ENCODE measurements at regions of chr1 and their contacts with region 1.

Region 1: GRCh38 chr1:203625628-203626019 is 1.0 kb upstream of the ATP2B4 start:
- DNase-seq: peak in 8 of 9 donors; percentile 54 to 88 (median 84)
- ATAC-seq: peak; percentile 82
- H3K4me3 ChIP-seq: peak overlapping the region; percentile 71
- H3K4me3 Mint-ChIP-seq: peak overlapping the region; percentile 89 to 100 (median 98)
- H3K27ac ChIP-seq: peak overlapping the region; percentile 82
- H3K27ac Mint-ChIP-seq: peak overlapping the region; percentile 73 to 98 (median 96)
- H3K4me1 ChIP-seq: peaks cover 17% of the 10 kb centered on the region in 2 donors
- H3K4me1 Mint-ChIP-seq: peaks cover 28 to 66% (median 37%) of the 10 kb centered on the region in 7 donors
- H3K27me3 ChIP-seq: no peaks in the 10 kb centered on the region
- H3K27me3 Mint-ChIP-seq: no peaks in the 10 kb centered on the region

Region 2: GRCh38 chr1:203320591-203321272 is 304.9 kb before region 1 on chr1:
- CTCF ChIA-PET with region 1: no interaction called
- POLR2A ChIA-PET with region 1: interaction called, 7 read pairs
- intact Hi-C with region 1: loop called (anchors 5 kb)
- DNase-seq: peak in 8 of 9 donors; percentile 50 to 93 (median 88)
- ATAC-seq: peak; percentile 76
- H3K4me3 ChIP-seq: peak overlapping the region; percentile 41
- H3K4me3 Mint-ChIP-seq: peak overlapping the region; percentile 66 to 88 (median 80)
- H3K27ac ChIP-seq: peak overlapping the region; percentile 98
- H3K27ac Mint-ChIP-seq: peak overlapping the region; percentile 85 to 100 (median 99)
- H3K4me1 ChIP-seq: peaks cover 66 to 74% of the 10 kb centered on the region in 2 donors
- H3K4me1 Mint-ChIP-seq: peaks cover 77 to 95% (median 92%) of the 10 kb centered on the region in 7 donors
- H3K27me3 ChIP-seq: no peaks in the 10 kb centered on the region
- H3K27me3 Mint-ChIP-seq: no peaks in the 10 kb centered on the region

Region 3: GRCh38 chr1:203512830-203513611 is 112.6 kb before region 1 on chr1:
- CTCF ChIA-PET with region 1: interaction called, 10 read pairs
- POLR2A ChIA-PET with region 1: interaction called, 12 read pairs
- intact Hi-C with region 1: loop called in 1 of 2 experiments (anchors 2 kb)
- DNase-seq: peak in 7 of 9 donors; percentile 37 to 67 (median 54)
- ATAC-seq: peak; percentile 81
- H3K4me3 ChIP-seq: peak overlapping the region; percentile 27
- H3K4me3 Mint-ChIP-seq: peak overlapping the region; percentile 41 to 93 (median 80)
- H3K27ac ChIP-seq: peak overlapping the region; percentile 68
- H3K27ac Mint-ChIP-seq: peak overlapping the region; percentile 85 to 98 (median 95)
- H3K4me1 ChIP-seq: peaks cover 0 to 28% of the 10 kb centered on the region in 2 donors
- H3K4me1 Mint-ChIP-seq: peaks cover 24 to 58% (median 52%) of the 10 kb centered on the region in 7 donors
- H3K27me3 ChIP-seq: no peaks in the 10 kb centered on the region
- H3K27me3 Mint-ChIP-seq: no peaks in the 10 kb centered on the region

Region 4: DNA sequence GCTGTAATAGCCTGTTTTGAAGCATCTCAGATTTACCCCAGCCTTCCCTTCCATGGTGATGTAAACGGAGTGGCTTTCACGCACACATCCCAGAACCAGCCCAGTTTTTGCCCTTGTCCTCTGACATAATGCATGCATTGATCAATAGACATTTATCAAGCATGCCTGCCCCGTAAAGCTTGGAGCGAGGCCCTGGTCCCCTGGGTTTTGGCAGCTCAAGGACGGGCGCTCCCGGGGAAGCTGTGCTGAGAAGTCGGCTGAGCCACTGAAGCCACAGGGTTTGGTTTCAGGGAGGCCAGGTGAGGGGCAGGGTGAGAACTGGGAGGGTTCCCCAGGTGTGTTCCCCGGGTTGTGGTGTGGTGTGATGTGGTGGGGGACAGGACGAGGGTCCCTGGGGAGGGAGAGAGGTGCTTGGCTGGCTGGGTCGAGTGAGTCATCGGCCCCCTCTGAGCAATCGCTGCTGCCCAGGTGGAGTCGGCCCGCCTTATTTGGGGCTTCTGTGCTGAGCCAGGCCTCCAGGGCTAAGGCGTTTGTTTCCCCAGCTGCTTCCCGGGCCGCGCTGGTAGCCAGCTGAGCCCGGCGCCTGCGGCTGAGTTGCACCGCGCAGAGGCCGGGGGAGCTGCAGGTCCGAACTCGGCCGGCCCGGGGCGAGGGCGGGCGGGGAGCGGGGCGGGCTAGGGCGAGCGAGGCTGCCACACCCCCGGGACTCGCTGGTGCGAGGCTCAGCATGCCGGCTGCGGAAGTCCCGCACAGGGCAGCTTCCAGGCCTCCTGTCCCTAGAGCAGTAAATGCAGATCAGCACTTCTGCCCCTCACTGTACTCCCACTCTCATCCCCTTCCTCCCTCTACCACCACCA is 24.6 kb after region 1 on chr1:
- CTCF ChIA-PET with region 1: interaction called, 23 read pairs
- POLR2A ChIA-PET with region 1: interaction called, 31 read pairs
- intact Hi-C with region 1: loop called (anchors 1 kb)
- DNase-seq: peak; percentile 24 to 63 (median 32)
- ATAC-seq: peak; percentile 66
- H3K4me3 ChIP-seq: peak overlapping the region; percentile 47
- H3K4me3 Mint-ChIP-seq: peak overlapping the region; percentile 73 to 92 (median 82)
- H3K27ac ChIP-seq: peak overlapping the region; percentile 70
- H3K27ac Mint-ChIP-seq: peak overlapping the region; percentile 79 to 94 (median 91)
- H3K4me1 ChIP-seq: peaks cover 51 to 72% of the 10 kb centered on the region in 2 donors
- H3K4me1 Mint-ChIP-seq: peaks cover 39 to 78% (median 68%) of the 10 kb centered on the region in 7 donors
- H3K27me3 ChIP-seq: no peaks in the 10 kb centered on the region
- H3K27me3 Mint-ChIP-seq: no peaks in the 10 kb centered on the region

Region 5: GRCh38 chr1:203702130-203702577 is 76.5 kb after region 1 on chr1:
- CTCF ChIA-PET with region 1: interaction called, 100 read pairs
- POLR2A ChIA-PET with region 1: interaction called, 38 read pairs
- intact Hi-C with region 1: loop called (anchors 1 kb)
- DNase-seq: peak; percentile 21 to 73 (median 54)
- ATAC-seq: peak; percentile 77
- H3K4me3 ChIP-seq: no peak overlapping the region
- H3K4me3 Mint-ChIP-seq: no peak overlapping the region
- H3K27ac ChIP-seq: no peak overlapping the region
- H3K27ac Mint-ChIP-seq: peak overlapping the region; percentile 58 to 92 (median 76)
- H3K4me1 ChIP-seq: no peaks in the 10 kb centered on the region
- H3K4me1 Mint-ChIP-seq: peaks cover 3 to 25% (median 12%) of the 10 kb centered on the region in 7 donors
- H3K27me3 ChIP-seq: no peaks in the 10 kb centered on the region
- H3K27me3 Mint-ChIP-seq: no peaks in the 10 kb centered on the region

Region 6: DNA sequence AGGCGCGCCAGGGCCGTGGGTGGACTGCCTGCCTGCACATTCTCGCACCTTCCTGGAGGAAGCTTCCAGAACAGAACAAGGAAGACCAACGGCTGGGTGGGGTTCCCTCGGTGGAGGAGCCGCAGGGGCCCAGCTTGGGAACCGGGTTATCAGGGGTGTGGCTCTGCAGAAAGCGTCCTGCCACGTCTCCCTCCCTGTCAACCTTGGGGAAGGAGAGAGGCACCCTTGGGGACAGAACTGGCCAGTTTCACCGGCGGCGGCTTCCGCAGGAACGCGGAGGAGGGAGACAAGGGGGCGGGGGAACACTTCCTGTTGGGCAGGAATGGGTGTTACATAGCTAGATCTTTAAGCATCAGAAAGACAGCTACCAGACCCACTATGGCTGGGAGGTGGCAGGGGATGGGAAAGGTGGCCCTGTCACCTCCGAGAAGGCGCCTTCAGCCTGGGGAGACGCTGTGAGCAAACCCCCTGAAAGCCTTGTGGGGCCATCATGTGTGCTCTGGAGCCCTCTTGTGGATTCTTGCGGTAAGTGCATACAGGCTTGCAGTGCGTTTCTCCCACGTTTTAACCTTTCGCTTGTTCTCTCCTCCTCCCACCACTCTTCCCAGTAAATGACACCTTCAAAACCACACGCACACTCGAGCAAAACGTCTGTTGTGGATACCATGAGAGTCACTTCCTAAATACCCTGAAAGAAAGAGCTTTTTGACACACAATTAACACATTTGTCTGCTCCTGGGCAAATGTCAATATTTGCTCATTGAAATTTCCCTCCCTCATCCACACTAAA is 737.9 kb after region 1 on chr1:
- CTCF ChIA-PET with region 1: no interaction called
- POLR2A ChIA-PET with region 1: no interaction called
- intact Hi-C with region 1: loop called in 1 of 2 experiments (anchors 1 kb)
- DNase-seq: peak; percentile 47 to 81 (median 74)
- ATAC-seq: peak; percentile 94
- H3K4me3 ChIP-seq: peak overlapping the region; percentile 69
- H3K4me3 Mint-ChIP-seq: peak overlapping the region; percentile 37 to 84 (median 70)
- H3K27ac ChIP-seq: peak overlapping the region; percentile 58
- H3K27ac Mint-ChIP-seq: peak overlapping the region; percentile 37 to 84 (median 69)
- H3K4me1 ChIP-seq: peaks cover 11 to 12% of the 10 kb centered on the region in 2 donors
- H3K4me1 Mint-ChIP-seq: peaks cover 7 to 18% (median 13%) of the 10 kb centered on the region in 7 donors
- H3K27me3 ChIP-seq: no peaks in the 10 kb centered on the region
- H3K27me3 Mint-ChIP-seq: peaks cover 0 to 8% (median 0%) of the 10 kb centered on the region in 5 donors

Measured in naive thymus-derived CD4-positive, alpha-beta T cell (primary cell).